RWPE1 (cell line): ENCODE measurements at regions of chr20 and their contacts with region 1.

Region 1: GRCh38 chr20:41317536-41318270 is at the start of gene ZHX3:
- DNase-seq: peak; percentile 100
- H3K27ac ChIP-seq: peak within 1 kb of the TSS; percentile 94
- CTCF ChIP-seq: no peak

Region 2: DNA sequence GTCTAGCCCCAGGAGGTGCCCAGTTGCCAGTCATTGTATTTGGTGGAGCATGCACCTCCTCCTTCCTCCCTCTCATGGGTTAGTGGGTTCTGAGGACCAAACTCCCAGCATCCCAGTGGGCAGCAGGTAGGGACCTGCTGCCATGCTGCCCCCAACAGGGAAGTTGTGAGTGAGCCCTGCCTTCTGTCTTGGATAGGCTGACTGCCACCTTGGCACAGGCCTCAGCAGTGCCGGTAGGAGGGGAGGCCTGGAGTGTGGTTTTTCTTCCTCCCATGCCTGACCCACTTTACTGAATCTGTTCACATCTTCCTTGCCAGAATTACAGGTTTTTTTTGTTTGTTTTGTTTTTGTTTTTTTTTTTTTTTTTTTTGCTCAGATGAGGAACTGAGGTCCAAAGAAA is 155.8 kb before region 1 on chr20:
- CTCF ChIA-PET with region 1: interaction called, 3 read pairs
- POLR2A ChIA-PET with region 1: interaction called, 10 read pairs
- DNase-seq: no peak
- H3K27ac ChIP-seq: peak overlapping the region; percentile 12; the same call in 1 of the 2 replicates
- CTCF ChIP-seq: no peak